ENCODE measurements at regions of chr2 and their contacts with region 1.

Region 1: DNA sequence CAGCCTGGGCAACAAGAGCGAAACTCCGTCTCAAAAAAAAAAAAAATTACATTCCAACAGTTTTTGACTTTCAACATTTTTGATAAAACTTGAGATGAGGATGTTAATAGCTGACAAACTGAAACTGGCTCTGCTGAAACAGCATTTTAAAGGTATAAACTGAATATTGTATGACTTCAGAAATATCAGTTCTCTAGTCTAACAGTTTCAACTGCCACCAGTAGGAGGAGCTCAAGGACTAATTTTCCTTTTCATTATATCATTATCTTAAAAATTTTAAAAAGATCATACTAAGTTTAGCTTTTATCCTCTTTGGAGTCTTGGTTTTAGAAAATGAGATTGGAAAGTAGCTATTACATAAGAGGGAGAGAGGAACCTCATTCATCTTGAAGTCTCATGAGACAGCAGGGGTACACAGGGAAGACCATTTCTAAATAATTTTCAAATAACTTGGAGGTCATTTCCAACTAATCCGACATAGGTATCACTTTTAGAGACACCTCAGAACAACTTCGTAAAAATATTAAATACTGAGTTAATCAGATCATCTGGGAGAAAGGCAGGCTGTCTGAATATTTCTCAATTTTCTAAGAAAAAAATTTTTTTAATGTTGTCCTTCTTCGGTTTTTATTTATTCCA is 37.6 kb upstream of the MCM6 start:
- H3K4me3 Mint-ChIP-seq: no peak overlapping the region
- H3K27ac Mint-ChIP-seq: no peak overlapping the region
- H3K4me1 Mint-ChIP-seq: no peaks in the 10 kb centered on the region
- H3K27me3 Mint-ChIP-seq: no peaks in the 10 kb centered on the region

Region 2: GRCh38 chr2:136129601-136130000 is 215.8 kb after region 1 on chr2:
- intact Hi-C with region 1: loop called (anchors 10 kb)
- H3K4me3 Mint-ChIP-seq: no peak overlapping the region
- H3K27ac Mint-ChIP-seq: peak overlapping the region; percentile 7
- H3K4me1 Mint-ChIP-seq: peaks cover 60% of the 10 kb centered on the region
- H3K27me3 Mint-ChIP-seq: peaks cover 38% of the 10 kb centered on the region

Region 3: GRCh38 chr2:136225950-136226835 is 312.3 kb after region 1 on chr2:
- intact Hi-C with region 1: no loop called
- H3K4me3 Mint-ChIP-seq: no peak overlapping the region
- H3K27ac Mint-ChIP-seq: no peak overlapping the region
- H3K4me1 Mint-ChIP-seq: peaks cover 25% of the 10 kb centered on the region
- H3K27me3 Mint-ChIP-seq: no peaks in the 10 kb centered on the region

Measured in dendritic cell treated with granulocyte-macrophage colony-stimulating factor and Interleukin-4, amounts not matched to agents 40 ng/mL and 50 ng/mL, for 4 days (primary cell).